MCF 10A (cell line): ENCODE measurements at regions of chr1 and their contacts with region 1.

Region 1: GRCh38 chr1:110495926-110496600 is 22.9 kb downstream of the KCNA10 start:
- DNase-seq: peak; percentile 77
- H3K4me3 Mint-ChIP-seq: no peak overlapping the region
- H3K27ac Mint-ChIP-seq: no peak overlapping the region
- H3K4me1 Mint-ChIP-seq: no peaks in the 10 kb centered on the region
- H3K27me3 Mint-ChIP-seq: no peaks in the 10 kb centered on the region
- CTCF ChIP-seq: peak; percentile 92

Region 2: GRCh38 chr1:110087812-110088738 is 408.0 kb before region 1 on chr1:
- CTCF ChIA-PET with region 1: interaction called, 12 read pairs
- POLR2A ChIA-PET with region 1: no interaction called
- intact Hi-C with region 1: no loop called
- DNase-seq: peak; percentile 70
- H3K4me3 Mint-ChIP-seq: no peak overlapping the region
- H3K27ac Mint-ChIP-seq: no peak overlapping the region
- H3K4me1 Mint-ChIP-seq: no peaks in the 10 kb centered on the region
- H3K27me3 Mint-ChIP-seq: peaks cover 47% of the 10 kb centered on the region
- CTCF ChIP-seq: peak; percentile 65

Region 3: GRCh38 chr1:110203021-110203661 is 292.9 kb before region 1 on chr1:
- CTCF ChIA-PET with region 1: interaction called, 74 read pairs
- POLR2A ChIA-PET with region 1: no interaction called
- intact Hi-C with region 1: loop called (anchors 1 kb)
- DNase-seq: peak; percentile 71
- H3K4me3 Mint-ChIP-seq: no peak overlapping the region
- H3K27ac Mint-ChIP-seq: no peak overlapping the region
- H3K4me1 Mint-ChIP-seq: no peaks in the 10 kb centered on the region
- H3K27me3 Mint-ChIP-seq: no peaks in the 10 kb centered on the region
- CTCF ChIP-seq: peak; percentile 67

Region 4: GRCh38 chr1:110338886-110339406 is 157.1 kb before region 1 on chr1 and contains the start of gene RBM15:
- CTCF ChIA-PET with region 1: interaction called, 17 read pairs
- POLR2A ChIA-PET with region 1: interaction called, 4 read pairs
- intact Hi-C with region 1: loop called (anchors 5 kb)
- DNase-seq: peak; percentile 100
- H3K4me3 Mint-ChIP-seq: no peak within 1 kb of the TSS
- H3K27ac Mint-ChIP-seq: no peak within 1 kb of the TSS
- H3K4me1 Mint-ChIP-seq: peaks cover 39% of the 10 kb centered on the region
- H3K27me3 Mint-ChIP-seq: no peaks in the 10 kb centered on the region
- CTCF ChIP-seq: no peak
- total RNA-seq, gene RBM15: 31.4 and 35.9 TPM in 2 replicates

Region 5: GRCh38 chr1:110433803-110434202 is 62.3 kb before region 1 on chr1:
- CTCF ChIA-PET with region 1: interaction called, 30 read pairs
- POLR2A ChIA-PET with region 1: no interaction called
- intact Hi-C with region 1: no loop called
- DNase-seq: peak; percentile 86
- H3K4me3 Mint-ChIP-seq: no peak overlapping the region
- H3K27ac Mint-ChIP-seq: peak overlapping the region; percentile 80
- H3K4me1 Mint-ChIP-seq: peaks cover 15% of the 10 kb centered on the region
- H3K27me3 Mint-ChIP-seq: peaks cover 26% of the 10 kb centered on the region
- CTCF ChIP-seq: peak; percentile 30

Region 6: GRCh38 chr1:110477041-110477440 is 19.0 kb before region 1 on chr1:
- CTCF ChIA-PET with region 1: interaction called, 273 read pairs
- POLR2A ChIA-PET with region 1: interaction called, 5 read pairs
- intact Hi-C with region 1: no loop called
- DNase-seq: peak; percentile 59
- H3K4me3 Mint-ChIP-seq: no peak overlapping the region
- H3K27ac Mint-ChIP-seq: no peak overlapping the region
- H3K4me1 Mint-ChIP-seq: peaks cover 18% of the 10 kb centered on the region
- H3K27me3 Mint-ChIP-seq: peaks cover 5% of the 10 kb centered on the region
- CTCF ChIP-seq: no peak

Region 7: GRCh38 chr1:110524311-110525251 is 28.5 kb after region 1 on chr1:
- CTCF ChIA-PET with region 1: interaction called, 30 read pairs
- POLR2A ChIA-PET with region 1: no interaction called
- intact Hi-C with region 1: no loop called
- DNase-seq: peak; percentile 40
- H3K4me3 Mint-ChIP-seq: no peak overlapping the region
- H3K27ac Mint-ChIP-seq: no peak overlapping the region
- H3K4me1 Mint-ChIP-seq: peaks cover 8% of the 10 kb centered on the region
- H3K27me3 Mint-ChIP-seq: peaks cover 65% of the 10 kb centered on the region
- CTCF ChIP-seq: peak; percentile 78